GM12878 (cell line): ENCODE measurements at regions of chr13 and their contacts with region 1.

Region 1: GRCh38 chr13:36346222-36347083 is at the start of gene SPART:
- DNase-seq: peak; percentile 34
- ATAC-seq: peak; percentile 86
- H3K4me3 ChIP-seq: peak within 1 kb of the TSS; percentile 77
- H3K27ac ChIP-seq: peak within 1 kb of the TSS; percentile 70
- H3K4me1 ChIP-seq: no peaks in the 10 kb centered on the region
- H3K27me3 ChIP-seq: 0 out of 4 replicates have a peak, but pooled peaks cover 0 to 3% of the 10 kb centered on the region in 2 experiments
- CTCF ChIP-seq: peak; percentile 95 to 98 (median 96)
- EP300 ChIP-seq: no peak
- POLR2A ChIP-seq: peak; percentile 54
- RAD21 ChIP-seq: peak; percentile 83
- polyA plus RNA-seq, gene SPART: 17.6 to 20.9 TPM

Region 2: GRCh38 chr13:36332986-36333385 is 13.5 kb before region 1 on chr13:
- CTCF ChIA-PET with region 1: interaction called, 7 read pairs
- POLR2A ChIA-PET with region 1: interaction called, 6 read pairs
- RAD21 ChIA-PET with region 1: interaction called, 13 read pairs
- SMC1A ChIA-PET with region 1: interaction called, 21 read pairs
- in situ Hi-C with region 1: no loop called
- intact Hi-C with region 1: no loop called
- DNase-seq: no peak
- ATAC-seq: no peak
- H3K4me3 ChIP-seq: no peak overlapping the region
- H3K27ac ChIP-seq: no peak overlapping the region
- H3K4me1 ChIP-seq: no peaks in the 10 kb centered on the region
- H3K27me3 ChIP-seq: no peaks in the 10 kb centered on the region
- CTCF ChIP-seq: no peak
- EP300 ChIP-seq: no peak
- POLR2A ChIP-seq: no peak
- RAD21 ChIP-seq: no peak

Region 3: DNA sequence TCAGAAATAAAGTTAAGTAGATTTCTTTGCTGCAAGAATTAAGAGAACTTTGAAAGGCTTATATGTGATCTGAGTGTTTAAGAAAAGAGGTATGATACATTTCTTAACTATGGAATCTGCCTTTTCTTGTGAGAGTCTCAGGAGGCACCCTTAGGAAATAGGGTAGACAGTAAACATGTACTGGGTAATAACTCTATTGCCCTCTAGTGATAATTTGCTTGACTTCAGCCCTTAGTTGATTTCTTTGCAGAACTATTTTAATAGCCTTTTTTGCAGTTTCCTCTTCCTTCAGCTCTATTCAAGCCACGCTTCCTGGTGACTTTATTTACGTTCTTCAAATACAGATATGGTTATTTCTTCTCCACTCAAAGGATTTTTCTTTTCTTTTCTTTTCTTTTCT is 48.8 kb after region 1 on chr13:
- CTCF ChIA-PET with region 1: interaction called, 94 read pairs
- POLR2A ChIA-PET with region 1: no interaction called
- RAD21 ChIA-PET with region 1: interaction called, 37 read pairs
- SMC1A ChIA-PET with region 1: interaction called, 27 read pairs
- in situ Hi-C with region 1: no loop called
- intact Hi-C with region 1: loop called (anchors 1 kb)
- DNase-seq: no peak
- ATAC-seq: peak; percentile 91
- H3K4me3 ChIP-seq: no peak overlapping the region
- H3K27ac ChIP-seq: no peak overlapping the region
- H3K4me1 ChIP-seq: no peaks in the 10 kb centered on the region
- H3K27me3 ChIP-seq: no peaks in the 10 kb centered on the region
- CTCF ChIP-seq: peak; percentile 13 to 59 (median 26); a peak in 3 of 6 replicates
- EP300 ChIP-seq: no peak
- POLR2A ChIP-seq: no peak
- RAD21 ChIP-seq: peak; percentile 42

Region 4: DNA sequence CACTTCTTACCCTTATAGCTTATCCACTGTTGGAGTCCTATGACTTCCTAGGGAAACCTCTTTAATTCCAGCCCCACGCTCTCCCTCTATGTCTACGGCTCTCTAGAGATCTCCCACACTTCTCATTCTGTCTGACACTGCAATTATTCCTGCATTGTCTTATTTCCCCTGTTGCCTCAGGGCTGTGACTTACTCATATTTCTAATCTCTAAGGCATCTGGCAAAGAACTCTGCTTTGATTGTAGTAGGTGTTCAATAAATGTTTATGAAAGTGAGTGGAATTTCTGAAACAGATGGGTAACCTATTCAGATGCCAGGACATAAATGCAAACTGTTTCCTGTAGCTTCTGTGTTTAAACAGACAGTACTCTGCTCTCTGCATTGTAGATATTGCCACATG is 225.0 kb after region 1 on chr13:
- CTCF ChIA-PET with region 1: no interaction called
- POLR2A ChIA-PET with region 1: no interaction called
- RAD21 ChIA-PET with region 1: no interaction called
- SMC1A ChIA-PET with region 1: no interaction called
- in situ Hi-C with region 1: no loop called
- intact Hi-C with region 1: no loop called
- DNase-seq: no peak
- ATAC-seq: no peak
- H3K4me3 ChIP-seq: no peak overlapping the region
- H3K27ac ChIP-seq: no peak overlapping the region
- H3K4me1 ChIP-seq: no peaks in the 10 kb centered on the region
- H3K27me3 ChIP-seq: no peaks in the 10 kb centered on the region
- CTCF ChIP-seq: no peak
- EP300 ChIP-seq: no peak
- POLR2A ChIP-seq: no peak
- RAD21 ChIP-seq: no peak

Region 5: DNA sequence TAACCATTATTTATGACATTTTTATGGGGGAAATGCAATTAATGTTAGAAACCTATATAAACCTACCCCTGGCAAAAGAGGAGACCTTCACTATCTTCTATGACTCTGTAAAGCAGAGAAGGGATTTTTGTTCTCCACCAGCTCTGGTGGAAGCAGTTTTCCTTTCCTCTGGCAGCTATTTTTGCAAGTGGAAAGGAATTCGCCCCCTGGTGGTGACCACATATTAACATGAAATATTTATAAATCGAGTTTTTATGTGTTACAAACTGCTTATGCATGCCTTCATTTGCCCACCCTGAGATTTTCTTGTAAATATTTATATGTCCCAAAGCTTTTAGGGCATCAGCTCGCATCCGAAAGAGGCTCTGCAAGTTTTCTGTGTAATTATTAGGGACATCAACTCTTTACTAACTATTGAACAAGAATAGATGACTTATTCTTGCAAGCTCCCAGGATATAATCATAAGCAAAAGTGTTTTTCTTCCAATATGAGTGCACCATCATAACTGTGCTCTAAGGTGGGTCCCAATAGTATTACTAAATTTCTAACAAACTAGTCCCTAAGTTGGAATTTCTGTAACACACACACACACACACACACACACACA is 389.8 kb after region 1 on chr13:
- CTCF ChIA-PET with region 1: interaction called, 35 read pairs
- POLR2A ChIA-PET with region 1: no interaction called
- RAD21 ChIA-PET with region 1: interaction called, 5 read pairs
- SMC1A ChIA-PET with region 1: interaction called, 15 read pairs
- in situ Hi-C with region 1: no loop called
- intact Hi-C with region 1: loop called (anchors 2 kb)
- DNase-seq: no peak
- ATAC-seq: no peak
- H3K4me3 ChIP-seq: no peak overlapping the region
- H3K27ac ChIP-seq: no peak overlapping the region
- H3K4me1 ChIP-seq: no peaks in the 10 kb centered on the region
- H3K27me3 ChIP-seq: no peaks in the 10 kb centered on the region
- CTCF ChIP-seq: peak; percentile 48 to 62 (median 56)
- EP300 ChIP-seq: no peak
- POLR2A ChIP-seq: no peak
- RAD21 ChIP-seq: peak; percentile 56

Region 6: GRCh38 chr13:36981156-36981743 is 634.8 kb after region 1 on chr13:
- CTCF ChIA-PET with region 1: interaction called, 4 read pairs
- POLR2A ChIA-PET with region 1: no interaction called
- RAD21 ChIA-PET with region 1: interaction called, 4 read pairs
- SMC1A ChIA-PET with region 1: interaction called, 10 read pairs
- in situ Hi-C with region 1: no loop called
- intact Hi-C with region 1: loop called (anchors 5 kb)
- DNase-seq: no peak
- ATAC-seq: peak; percentile 74
- H3K4me3 ChIP-seq: no peak overlapping the region
- H3K27ac ChIP-seq: no peak overlapping the region
- H3K4me1 ChIP-seq: no peaks in the 10 kb centered on the region
- H3K27me3 ChIP-seq: no peaks in the 10 kb centered on the region
- CTCF ChIP-seq: peak; percentile 25 to 59 (median 47); a peak in 5 of 6 replicates
- EP300 ChIP-seq: no peak
- POLR2A ChIP-seq: no peak
- RAD21 ChIP-seq: peak; percentile 61

Region 7: GRCh38 chr13:37068962-37069361 is 722.5 kb after region 1 on chr13:
- CTCF ChIA-PET with region 1: no interaction called
- POLR2A ChIA-PET with region 1: no interaction called
- RAD21 ChIA-PET with region 1: no interaction called
- SMC1A ChIA-PET with region 1: no interaction called
- in situ Hi-C with region 1: no loop called
- intact Hi-C with region 1: loop called (anchors 5 kb)
- DNase-seq: no peak
- ATAC-seq: peak; percentile 52; the same call in 2 of the 3 replicates
- H3K4me3 ChIP-seq: no peak overlapping the region
- H3K27ac ChIP-seq: no peak overlapping the region
- H3K4me1 ChIP-seq: no peaks in the 10 kb centered on the region
- H3K27me3 ChIP-seq: no peaks in the 10 kb centered on the region; a peak in 1 of 4 replicates
- CTCF ChIP-seq: peak in 2 of 3 experiments; percentile 4 to 29; a peak in 2 of 6 replicates
- EP300 ChIP-seq: no peak
- POLR2A ChIP-seq: no peak
- RAD21 ChIP-seq: peak; percentile 36